PC-3 (cell line): ENCODE measurements at regions of chr1 and their contacts with region 1.

Region 1: GRCh38 chr1:152001391-152002249 is 8.0 kb upstream of the S100A10 start:
- DNase-seq: peak; percentile 97
- ATAC-seq: peak; percentile 34
- H3K4me3 ChIP-seq: no peak overlapping the region
- H3K27ac ChIP-seq: no peak overlapping the region
- H3K4me1 ChIP-seq: peaks cover 45% of the 10 kb centered on the region
- H3K27me3 ChIP-seq: no peaks in the 10 kb centered on the region
- CTCF ChIP-seq: peak; percentile 98

Region 2: GRCh38 chr1:151846062-151846568 is 155.5 kb before region 1 on chr1:
- CTCF ChIA-PET with region 1: no interaction called
- POLR2A ChIA-PET with region 1: no interaction called
- intact Hi-C with region 1: loop called (anchors 5 kb)
- DNase-seq: peak; percentile 80
- ATAC-seq: peak; percentile 97
- H3K4me3 ChIP-seq: no peak overlapping the region
- H3K27ac ChIP-seq: peak overlapping the region; percentile 50
- H3K4me1 ChIP-seq: peaks cover 19% of the 10 kb centered on the region
- H3K27me3 ChIP-seq: no peaks in the 10 kb centered on the region
- CTCF ChIP-seq: peak; percentile 54

Region 3: DNA sequence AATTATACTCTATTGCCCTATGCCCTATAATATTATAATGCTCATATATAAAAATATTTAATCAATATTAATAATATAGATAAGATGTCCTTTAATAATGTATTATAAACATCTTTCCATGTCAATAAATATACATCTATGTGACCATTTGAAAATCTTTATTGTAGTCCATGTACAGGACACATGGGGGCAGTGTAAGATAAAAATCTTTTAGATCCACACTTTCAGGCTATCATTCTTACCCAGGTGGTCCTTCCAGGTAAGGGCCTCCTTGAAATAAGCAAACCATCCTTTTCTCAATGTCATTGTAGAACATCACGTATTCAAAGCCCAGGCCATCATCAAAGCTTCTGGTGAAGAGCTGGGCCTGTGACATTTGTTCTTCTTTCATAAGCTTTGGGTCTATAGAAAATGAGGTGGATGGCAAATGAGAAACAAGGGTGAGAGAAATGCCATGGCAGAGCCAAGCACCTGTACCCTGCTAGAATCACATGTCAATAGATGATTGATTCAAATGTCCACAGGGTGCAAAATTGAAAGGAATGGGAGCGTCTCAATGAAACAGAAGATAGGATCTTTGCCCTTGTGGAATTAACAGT is 112.5 kb before region 1 on chr1:
- CTCF ChIA-PET with region 1: interaction called, 5 read pairs
- POLR2A ChIA-PET with region 1: interaction called, 3 read pairs
- intact Hi-C with region 1: loop called (anchors 1 kb)
- DNase-seq: peak; percentile 62
- ATAC-seq: peak; percentile 36; the same call in 1 of the 2 replicates
- H3K4me3 ChIP-seq: no peak overlapping the region
- H3K27ac ChIP-seq: no peak overlapping the region
- H3K4me1 ChIP-seq: peaks cover 26% of the 10 kb centered on the region
- H3K27me3 ChIP-seq: no peaks in the 10 kb centered on the region
- CTCF ChIP-seq: peak; percentile 73

Region 4: DNA sequence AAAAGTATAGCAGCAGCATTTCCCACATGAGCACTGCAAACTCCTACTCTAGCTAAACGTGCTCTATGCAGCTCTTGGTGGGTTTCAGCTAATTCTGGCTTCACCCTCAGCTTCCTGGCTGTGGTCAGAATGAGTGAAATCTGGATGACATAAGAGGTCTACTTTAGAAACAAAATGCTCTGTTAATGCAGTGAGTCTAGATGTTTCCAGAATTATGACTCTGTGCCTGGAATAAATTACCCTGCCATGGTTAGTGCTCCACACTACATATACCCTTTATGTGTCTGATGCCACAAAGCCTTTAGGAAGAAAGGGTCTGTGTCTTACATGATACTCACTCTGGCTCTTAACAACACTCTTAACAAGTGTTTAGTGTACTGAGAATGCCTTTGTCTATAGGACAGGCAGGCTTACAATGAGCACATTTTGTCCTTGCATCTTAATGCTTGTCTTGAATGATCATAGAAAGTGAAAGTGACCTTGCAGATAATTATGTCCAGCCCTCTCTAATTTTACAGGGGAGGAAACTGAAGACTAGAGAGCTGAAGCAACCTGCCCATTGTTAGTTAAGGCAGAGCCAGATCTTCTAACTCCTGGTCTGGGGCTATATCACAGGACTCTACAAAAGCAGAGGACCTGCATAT is 17.2 kb before region 1 on chr1:
- CTCF ChIA-PET with region 1: interaction called, 15 read pairs
- POLR2A ChIA-PET with region 1: interaction called, 9 read pairs
- intact Hi-C with region 1: no loop called
- DNase-seq: no peak
- ATAC-seq: no peak
- H3K4me3 ChIP-seq: no peak overlapping the region
- H3K27ac ChIP-seq: no peak overlapping the region
- H3K4me1 ChIP-seq: peaks cover 76% of the 10 kb centered on the region
- H3K27me3 ChIP-seq: no peaks in the 10 kb centered on the region
- CTCF ChIP-seq: no peak